ENCODE measurements at regions of chr6 and their contacts with region 1.

Region 1: DNA sequence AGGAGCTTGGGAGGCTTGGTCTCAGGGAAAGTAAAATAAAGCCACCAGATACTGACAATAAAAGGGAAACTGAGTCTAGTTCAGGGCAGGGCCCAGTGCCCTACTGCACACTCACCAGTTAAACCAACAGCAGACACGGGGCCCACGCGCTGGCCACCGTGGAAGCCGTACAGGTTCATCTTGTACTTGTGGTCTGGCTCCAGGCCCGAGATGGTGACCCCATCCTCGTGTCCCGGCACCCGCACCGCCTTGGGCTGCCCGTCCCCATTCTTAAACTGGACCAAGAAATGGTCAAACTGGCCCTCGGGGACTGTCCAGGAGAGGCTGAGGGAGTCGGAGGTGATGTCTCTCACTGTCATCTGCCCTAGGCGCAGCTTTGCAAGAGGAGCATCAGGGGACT is 26.5 kb downstream of the CYP21A2 start:
- DNase-seq: no peak
- ATAC-seq: no peak
- H3K4me3 ChIP-seq: no peak overlapping the region
- H3K4me3 Mint-ChIP-seq: no peak overlapping the region
- H3K27ac ChIP-seq: no peak overlapping the region
- H3K27ac Mint-ChIP-seq: no peak overlapping the region
- H3K4me1 ChIP-seq: no peaks in the 10 kb centered on the region
- H3K4me1 Mint-ChIP-seq: no peaks in the 10 kb centered on the region
- H3K27me3 ChIP-seq: no peaks in the 10 kb centered on the region
- H3K27me3 Mint-ChIP-seq: no peaks in the 10 kb centered on the region
- CTCF ChIP-seq: no peak

Region 2: DNA sequence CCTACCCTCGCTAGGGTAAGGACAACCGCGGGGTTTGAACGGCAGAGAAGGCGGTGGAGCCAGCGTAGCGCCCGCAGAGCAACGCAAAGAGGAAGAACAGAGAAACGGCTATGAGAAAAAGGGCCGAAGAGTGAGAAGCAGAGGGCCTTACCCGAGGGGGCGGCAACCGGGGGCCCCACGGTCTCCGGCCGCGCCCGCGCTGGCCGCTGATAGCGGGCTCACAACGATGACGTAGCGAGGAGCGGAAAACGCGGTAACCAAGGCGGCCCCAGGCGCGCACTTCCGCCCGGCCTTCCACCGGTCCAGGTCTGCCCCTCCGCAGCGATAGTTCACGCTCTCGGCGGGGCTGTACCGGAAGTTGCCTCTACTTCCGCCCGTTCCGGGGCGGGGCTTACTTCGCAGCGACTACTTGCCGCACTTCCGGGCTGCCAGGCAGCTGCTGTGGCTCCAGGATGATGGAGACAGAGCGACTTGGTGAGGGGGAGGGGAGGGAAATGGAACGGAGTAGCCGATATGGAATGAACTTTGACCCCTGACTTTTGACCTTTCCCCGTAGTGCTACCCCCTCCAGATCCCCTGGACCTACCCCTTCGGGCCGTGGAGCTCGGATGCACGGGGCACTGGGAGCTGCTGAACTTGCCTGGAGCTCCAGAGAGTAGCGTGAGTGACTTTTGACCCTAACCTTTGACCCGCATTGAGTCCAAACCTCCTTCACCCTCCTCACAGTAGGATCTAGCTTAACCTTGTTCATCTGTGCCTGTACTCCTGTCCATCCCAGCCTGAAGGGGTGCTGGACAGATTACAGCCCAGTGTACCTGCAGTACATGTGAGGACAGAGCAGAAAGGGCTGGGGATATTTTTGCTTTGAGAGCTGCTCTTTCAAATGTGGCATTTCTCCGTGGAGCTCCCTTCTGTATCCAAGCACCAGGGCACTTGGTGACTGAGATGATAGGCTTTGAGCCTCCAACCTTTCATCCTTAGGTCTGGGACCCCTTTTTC is 105.7 kb before region 1 on chr6 and contains the starts of genes NELFE and SKIC2:
- CTCF ChIA-PET with region 1: no interaction called
- POLR2A ChIA-PET with region 1: no interaction called
- intact Hi-C with region 1: no loop called
- DNase-seq: peak; percentile 97 to 99 (median 99)
- ATAC-seq: peak; percentile 98
- H3K4me3 ChIP-seq: peak within 1 kb of the TSS; percentile 85 to 91
- H3K4me3 Mint-ChIP-seq: peak within 1 kb of the TSS; percentile 95
- H3K27ac ChIP-seq: peak within 1 kb of the TSS; percentile 97 to 99
- H3K27ac Mint-ChIP-seq: peak within 1 kb of the TSS; percentile 97
- H3K4me1 ChIP-seq: peaks cover 25% of the 10 kb centered on the region
- H3K4me1 Mint-ChIP-seq: peaks cover 39% of the 10 kb centered on the region
- H3K27me3 ChIP-seq: no peaks in the 10 kb centered on the region
- H3K27me3 Mint-ChIP-seq: no peaks in the 10 kb centered on the region
- CTCF ChIP-seq: no peak
- total RNA-seq, gene NELFE: 50.4 to 55.1 TPM
- total RNA-seq, gene SKIC2: 107 to 115 TPM

Region 3: DNA sequence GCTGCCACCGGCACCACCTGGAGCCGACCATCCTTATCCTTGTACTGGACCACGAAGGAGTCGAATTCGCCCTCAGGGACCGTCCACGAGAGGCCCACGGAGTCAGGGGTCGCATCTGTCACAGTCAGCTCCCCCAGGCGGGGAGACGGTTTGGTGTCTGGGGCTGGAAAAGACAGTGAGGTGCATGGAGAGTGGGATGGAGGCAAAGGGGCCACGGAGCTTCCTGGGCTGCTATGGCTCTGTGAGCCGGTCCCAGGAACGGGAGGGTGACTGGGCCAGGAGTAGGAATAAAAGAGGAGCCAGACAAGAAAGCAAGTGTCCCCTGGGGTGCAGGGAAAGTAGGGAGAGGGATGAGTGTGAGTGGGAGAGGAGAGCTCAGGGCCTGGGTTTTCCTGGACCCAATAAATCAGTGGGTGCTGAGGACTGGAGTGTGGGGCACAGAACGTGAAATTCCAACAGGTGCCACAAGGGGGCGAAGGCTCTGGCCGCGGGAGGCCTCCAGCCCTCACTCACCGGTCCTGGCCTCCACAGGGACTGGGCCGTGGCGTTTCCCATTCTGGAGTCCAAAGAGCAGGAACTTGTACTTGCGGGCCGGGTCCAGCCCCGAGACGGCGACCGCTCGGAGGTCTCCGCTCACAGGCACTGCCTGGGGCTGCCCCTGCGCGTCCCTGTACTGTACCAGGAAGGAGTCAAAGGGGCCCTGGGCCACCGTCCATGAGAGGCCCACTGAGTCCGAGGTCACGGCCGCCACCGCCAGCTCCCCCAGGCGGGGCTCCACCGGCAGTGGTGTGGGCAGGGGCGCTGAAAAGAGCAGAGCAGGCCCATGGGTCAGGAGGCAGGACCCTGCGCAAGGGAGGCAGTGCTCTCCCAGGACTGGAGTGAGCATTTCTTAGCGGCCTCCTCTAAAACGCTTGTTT is 16.6 kb before region 1 on chr6:
- CTCF ChIA-PET with region 1: interaction called, 12 read pairs
- POLR2A ChIA-PET with region 1: no interaction called
- intact Hi-C with region 1: no loop called
- DNase-seq: peak; percentile 39 to 81 (median 71)
- ATAC-seq: peak; percentile 78
- H3K4me3 ChIP-seq: no peak overlapping the region
- H3K4me3 Mint-ChIP-seq: peak overlapping the region; percentile 26
- H3K27ac ChIP-seq: no peak overlapping the region
- H3K27ac Mint-ChIP-seq: no peak overlapping the region
- H3K4me1 ChIP-seq: no peaks in the 10 kb centered on the region
- H3K4me1 Mint-ChIP-seq: peaks cover 4% of the 10 kb centered on the region
- H3K27me3 ChIP-seq: no peaks in the 10 kb centered on the region
- H3K27me3 Mint-ChIP-seq: no peaks in the 10 kb centered on the region
- CTCF ChIP-seq: peak; percentile 93

Measured in CD8-positive, alpha-beta T cell (primary cell).